ENCODE measurements at regions of chr4 and their contacts with region 1.

Region 1: DNA sequence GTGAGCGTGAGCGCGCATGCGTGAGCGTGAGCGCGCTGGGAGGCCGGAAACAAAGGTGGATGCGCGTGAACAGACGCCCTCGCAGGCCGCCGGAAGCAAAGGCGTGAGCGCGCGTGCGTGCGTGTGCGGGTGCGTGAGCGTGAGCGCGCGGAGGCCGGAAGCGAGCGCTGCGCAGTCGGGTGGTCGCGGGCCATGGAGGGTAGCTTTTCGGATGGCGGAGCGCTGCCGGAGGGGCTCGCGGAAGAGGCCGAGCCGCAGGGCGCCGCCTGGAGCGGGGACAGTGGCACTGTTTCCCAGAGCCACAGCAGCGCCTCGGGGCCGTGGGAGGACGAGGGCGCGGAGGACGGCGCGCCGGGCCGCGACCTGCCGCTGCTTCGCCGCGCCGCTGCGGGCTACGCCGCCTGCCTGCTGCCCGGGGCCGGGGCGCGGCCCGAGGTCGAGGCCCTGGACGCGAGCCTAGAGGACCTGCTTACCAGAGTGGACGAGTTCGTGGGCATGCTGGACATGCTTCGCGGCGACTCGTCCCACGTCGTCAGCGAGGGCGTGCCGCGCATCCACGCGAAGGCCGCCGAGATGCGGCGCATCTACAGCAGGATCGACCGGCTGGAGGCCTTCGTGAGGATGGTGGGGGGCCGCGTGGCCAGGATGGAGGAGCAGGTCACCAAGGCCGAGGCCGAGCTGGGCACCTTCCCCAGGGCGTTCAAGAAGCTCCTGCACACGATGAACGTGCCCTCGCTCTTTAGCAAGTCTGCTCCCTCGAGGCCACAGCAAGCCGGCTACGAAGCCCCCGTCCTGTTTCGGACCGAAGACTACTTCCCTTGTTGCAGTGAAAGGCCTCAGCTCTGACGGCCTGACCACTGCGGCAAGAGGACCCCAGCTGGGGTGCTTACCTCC is at the start of gene BLOC1S4:
- DNase-seq: peak; percentile 80
- ATAC-seq: peak; percentile 79
- H3K4me3 ChIP-seq: peak within 1 kb of the TSS; percentile 83 to 93 (median 88)
- H3K27ac ChIP-seq: peak within 1 kb of the TSS; percentile 79
- H3K4me1 ChIP-seq: peaks cover 45% of the 10 kb centered on the region
- H3K27me3 ChIP-seq: no peaks in the 10 kb centered on the region
- CTCF ChIP-seq: no peak; the same call in 1 of the 2 replicates
- EP300 ChIP-seq: no peak
- POLR2A ChIP-seq: peak in 1 of 2 experiments; percentile 76; a peak in 2 of 4 replicates
- RAD21 ChIP-seq: peak; percentile 66
- total RNA-seq, gene BLOC1S4: 18.7 and 20.9 TPM in 2 replicates

Region 2: GRCh38 chr4:6695660-6696630 is 20.3 kb before region 1 on chr4:
- CTCF ChIA-PET with region 1: no interaction called
- POLR2A ChIA-PET with region 1: interaction called, 15 read pairs
- in situ Hi-C with region 1: no loop called
- intact Hi-C with region 1: no loop called
- DNase-seq: peak; percentile 96
- ATAC-seq: peak; percentile 87
- H3K4me3 ChIP-seq: peak overlapping the region; percentile 82 to 96 (median 83)
- H3K27ac ChIP-seq: peak overlapping the region; percentile 84
- H3K4me1 ChIP-seq: peaks cover 60% of the 10 kb centered on the region
- H3K27me3 ChIP-seq: no peaks in the 10 kb centered on the region; a peak in 1 of 5 replicates
- CTCF ChIP-seq: peak; percentile 66
- EP300 ChIP-seq: peak; percentile 74 to 84
- POLR2A ChIP-seq: peak in 1 of 2 experiments; percentile 67; a peak in 2 of 4 replicates
- RAD21 ChIP-seq: peak; percentile 70

Region 3: GRCh38 chr4:6761649-6762602 is 45.7 kb after region 1 on chr4:
- CTCF ChIA-PET with region 1: interaction called, 3 read pairs
- POLR2A ChIA-PET with region 1: interaction called, 23 read pairs
- in situ Hi-C with region 1: no loop called
- intact Hi-C with region 1: loop called (anchors 5 kb)
- DNase-seq: no peak
- ATAC-seq: peak; percentile 90
- H3K4me3 ChIP-seq: peak overlapping the region in 1 of 3 experiments; percentile 23; a peak in 2 of 6 replicates
- H3K27ac ChIP-seq: no peak overlapping the region
- H3K4me1 ChIP-seq: peaks cover 48% of the 10 kb centered on the region
- H3K27me3 ChIP-seq: no peaks in the 10 kb centered on the region
- CTCF ChIP-seq: no peak
- EP300 ChIP-seq: no peak
- POLR2A ChIP-seq: no peak
- RAD21 ChIP-seq: no peak

Region 4: GRCh38 chr4:6783053-6783981 is 67.1 kb after region 1 on chr4:
- CTCF ChIA-PET with region 1: no interaction called
- POLR2A ChIA-PET with region 1: interaction called, 5 read pairs
- in situ Hi-C with region 1: no loop called
- intact Hi-C with region 1: loop called (anchors 2 kb)
- DNase-seq: peak; percentile 80
- ATAC-seq: peak; percentile 74
- H3K4me3 ChIP-seq: peak overlapping the region; percentile 93 to 98 (median 95)
- H3K27ac ChIP-seq: peak overlapping the region; percentile 93
- H3K4me1 ChIP-seq: peaks cover 59% of the 10 kb centered on the region
- H3K27me3 ChIP-seq: no peaks in the 10 kb centered on the region; a peak in 1 of 5 replicates
- CTCF ChIP-seq: peak; percentile 65
- EP300 ChIP-seq: 0 out of 4 replicates have a peak, but pooled peaks have one; percentile 25 to 31
- POLR2A ChIP-seq: peak in 1 of 2 experiments; percentile 58; a peak in 2 of 4 replicates
- RAD21 ChIP-seq: no peak; the same call in none of the 2 replicates

Measured in HepG2 (cell line).